ENCODE measurements at regions of chr3 and their contacts with region 1.

Region 1: DNA sequence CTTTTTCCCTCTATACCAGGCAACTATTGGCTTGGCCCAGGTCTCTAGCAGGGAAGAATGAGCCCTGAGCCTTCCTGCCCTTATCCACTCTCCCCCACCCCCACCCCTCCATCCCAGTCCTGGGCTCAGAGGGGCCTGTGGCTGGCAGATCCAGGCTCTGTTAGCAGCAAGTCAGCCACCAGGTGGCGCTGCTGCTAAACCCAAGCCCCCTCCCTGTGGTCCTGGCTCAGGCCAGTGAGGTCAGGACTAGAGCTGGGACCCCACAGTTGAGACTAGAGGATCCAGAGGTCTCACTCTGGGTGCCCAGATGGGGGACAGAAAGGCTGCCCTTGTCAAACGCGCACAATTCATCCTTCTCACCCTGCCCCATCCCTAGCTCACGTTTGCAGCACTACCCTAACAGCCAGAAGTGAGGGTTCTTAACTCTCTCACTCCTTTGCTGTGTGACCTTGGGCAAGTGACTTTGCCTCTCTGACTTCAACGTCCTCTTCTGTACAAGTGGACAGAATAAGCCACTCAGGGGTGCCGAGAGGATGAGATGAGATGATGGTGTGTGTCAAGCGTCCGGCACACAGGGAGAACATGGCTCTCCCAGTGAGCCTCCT is 46.8 kb upstream of the SLC6A1 start:
- DNase-seq: peak; percentile 93
- ATAC-seq: peak; percentile 98
- H3K4me3 Mint-ChIP-seq: no peak overlapping the region
- H3K27ac Mint-ChIP-seq: no peak overlapping the region
- H3K4me1 Mint-ChIP-seq: peaks cover 2% of the 10 kb centered on the region; the same call in 1 of the 2 replicates
- H3K27me3 Mint-ChIP-seq: no peaks in the 10 kb centered on the region; the same call in none of the 2 replicates
- CTCF ChIP-seq: peak; percentile 80

Region 2: GRCh38 chr3:10292505-10293419 is 653.0 kb before region 1 on chr3 and contains the start of gene GHRL:
- CTCF ChIA-PET with region 1: no interaction called
- POLR2A ChIA-PET with region 1: no interaction called
- DNase-seq: no peak
- ATAC-seq: no peak
- H3K4me3 Mint-ChIP-seq: no peak within 1 kb of the TSS
- H3K27ac Mint-ChIP-seq: no peak within 1 kb of the TSS; the same call in 1 of the 2 replicates
- H3K4me1 Mint-ChIP-seq: no peaks in the 10 kb centered on the region
- H3K27me3 Mint-ChIP-seq: no peaks in the 10 kb centered on the region
- CTCF ChIP-seq: no peak
- total RNA-seq, gene GHRL: 0.34 to 0.35 TPM in 2 of 3 replicates, not detected in the other

Region 3: GRCh38 chr3:10764259-10765051 is 181.3 kb before region 1 on chr3:
- CTCF ChIA-PET with region 1: interaction called, 12 read pairs
- POLR2A ChIA-PET with region 1: no interaction called
- DNase-seq: no peak
- ATAC-seq: peak; percentile 62
- H3K4me3 Mint-ChIP-seq: no peak overlapping the region
- H3K27ac Mint-ChIP-seq: no peak overlapping the region
- H3K4me1 Mint-ChIP-seq: peaks cover 8% of the 10 kb centered on the region
- H3K27me3 Mint-ChIP-seq: no peaks in the 10 kb centered on the region; the same call in 1 of the 2 replicates
- CTCF ChIP-seq: no peak

Region 4: GRCh38 chr3:10926811-10927521 is 18.8 kb before region 1 on chr3:
- CTCF ChIA-PET with region 1: interaction called, 10 read pairs
- POLR2A ChIA-PET with region 1: no interaction called
- DNase-seq: no peak
- ATAC-seq: no peak
- H3K4me3 Mint-ChIP-seq: no peak overlapping the region
- H3K27ac Mint-ChIP-seq: no peak overlapping the region
- H3K4me1 Mint-ChIP-seq: 0 out of 2 replicates have a peak, but pooled peaks cover under 1% of the 10 kb centered on the region
- H3K27me3 Mint-ChIP-seq: peaks cover 10% of the 10 kb centered on the region; the same call in 1 of the 2 replicates
- CTCF ChIP-seq: no peak

Region 5: GRCh38 chr3:10977892-10978510 is 32.2 kb after region 1 on chr3:
- CTCF ChIA-PET with region 1: interaction called, 12 read pairs
- POLR2A ChIA-PET with region 1: no interaction called
- DNase-seq: peak; percentile 45
- ATAC-seq: peak; percentile 92
- H3K4me3 Mint-ChIP-seq: peak overlapping the region; percentile 4; the same call in 1 of the 2 replicates
- H3K27ac Mint-ChIP-seq: peak overlapping the region; percentile 54
- H3K4me1 Mint-ChIP-seq: peaks cover 24% of the 10 kb centered on the region
- H3K27me3 Mint-ChIP-seq: peaks cover 21% of the 10 kb centered on the region
- CTCF ChIP-seq: no peak

Region 6: DNA sequence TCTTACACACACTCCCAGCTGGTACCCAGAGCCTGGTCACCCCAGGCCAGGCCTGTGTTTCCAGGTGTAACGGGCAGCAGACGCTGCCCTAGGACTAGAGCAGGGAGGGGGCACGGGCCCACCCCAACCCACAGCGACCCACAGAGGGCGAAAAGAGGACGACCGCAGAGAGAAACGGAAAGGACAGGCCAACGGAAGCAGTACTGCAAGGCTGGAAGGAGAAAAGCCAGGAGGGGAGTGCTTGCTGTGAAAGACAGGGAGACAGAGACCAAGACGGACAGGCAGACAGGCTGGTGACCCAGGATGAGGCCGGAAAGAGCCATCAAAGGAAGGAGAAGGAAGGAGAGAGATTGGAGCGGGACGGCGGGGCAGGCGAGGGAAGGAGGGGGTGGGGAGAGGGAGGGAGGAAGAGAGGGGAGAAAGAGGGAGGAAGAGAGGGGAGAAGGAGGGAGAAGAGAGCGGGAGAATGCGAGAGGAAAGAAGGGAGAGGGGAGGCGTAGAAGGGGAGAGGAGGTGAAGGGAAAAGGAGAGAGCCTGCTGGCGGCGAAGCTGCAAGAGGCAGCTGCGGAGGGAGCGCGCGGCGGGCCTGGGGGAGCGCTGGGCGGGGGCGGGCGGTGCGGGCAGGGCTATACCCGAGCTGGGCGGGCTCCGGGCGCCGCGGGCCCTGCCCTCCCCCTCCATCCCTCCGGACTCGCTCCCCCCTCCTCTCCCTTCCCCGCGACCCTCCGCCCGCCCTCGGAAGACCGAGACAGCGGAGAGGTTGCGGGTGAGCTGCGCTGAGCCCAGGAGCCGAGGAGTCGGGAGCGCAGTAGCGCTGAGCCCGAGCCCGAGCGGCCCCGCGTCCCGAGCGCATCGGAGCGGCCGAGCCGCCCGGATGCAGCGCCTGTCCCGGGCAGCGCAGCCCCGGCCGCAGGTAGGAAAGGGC is 46.5 kb after region 1 on chr3 and contains the start of gene SLC6A1:
- CTCF ChIA-PET with region 1: interaction called, 15 read pairs
- POLR2A ChIA-PET with region 1: no interaction called
- DNase-seq: peak; percentile 66
- ATAC-seq: peak; percentile 76
- H3K4me3 Mint-ChIP-seq: peak within 1 kb of the TSS; percentile 94
- H3K27ac Mint-ChIP-seq: peak within 1 kb of the TSS; percentile 70
- H3K4me1 Mint-ChIP-seq: peaks cover 23% of the 10 kb centered on the region
- H3K27me3 Mint-ChIP-seq: peaks cover 71% of the 10 kb centered on the region
- CTCF ChIP-seq: no peak
- total RNA-seq, gene SLC6A1: 0.50 to 0.72 TPM (median 0.50 TPM) in 3 replicates

Region 7: DNA sequence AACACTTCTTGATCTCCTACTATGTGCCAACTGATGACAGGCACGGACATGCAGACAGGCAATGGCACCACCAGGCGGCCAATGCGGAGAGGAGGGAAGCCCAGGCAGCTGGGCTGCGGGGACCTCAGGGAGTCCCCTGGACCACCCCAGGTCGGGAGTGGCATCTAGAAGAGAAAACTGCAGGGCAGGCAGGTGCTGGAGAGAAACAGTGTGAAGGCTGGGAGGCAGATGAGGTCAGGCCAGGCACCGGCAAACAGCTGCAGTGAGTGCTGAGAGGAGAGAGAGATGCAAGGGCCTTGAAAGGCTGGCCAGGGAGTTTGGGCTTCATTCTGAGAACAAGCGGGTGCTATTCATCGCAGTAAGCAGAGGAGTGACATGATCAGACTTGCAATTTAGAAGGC is 75.8 kb after region 1 on chr3:
- CTCF ChIA-PET with region 1: interaction called, 17 read pairs
- POLR2A ChIA-PET with region 1: no interaction called
- DNase-seq: peak; percentile 31
- ATAC-seq: peak; percentile 82
- H3K4me3 Mint-ChIP-seq: no peak overlapping the region
- H3K27ac Mint-ChIP-seq: no peak overlapping the region
- H3K4me1 Mint-ChIP-seq: no peaks in the 10 kb centered on the region
- H3K27me3 Mint-ChIP-seq: peaks cover 16% of the 10 kb centered on the region
- CTCF ChIP-seq: no peak

Region 8: DNA sequence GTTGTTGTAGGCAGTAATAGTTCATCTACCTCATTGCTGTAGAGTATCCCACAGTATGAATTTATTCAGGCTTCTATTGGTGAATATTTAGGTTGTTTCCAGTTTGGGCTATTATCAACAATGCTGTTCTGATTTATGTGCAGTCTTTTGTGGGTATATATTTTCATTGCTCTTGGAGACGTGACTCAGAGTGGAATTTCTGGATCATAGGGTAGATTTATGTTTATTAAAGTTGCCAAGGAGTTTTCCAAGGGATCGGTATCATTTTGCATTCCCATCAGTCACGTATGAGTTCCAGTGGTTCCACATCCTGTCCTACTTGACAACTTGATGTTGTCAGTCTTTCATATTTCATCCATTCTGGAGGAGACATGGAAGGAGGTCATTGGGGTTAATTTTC is 200.1 kb after region 1 on chr3:
- CTCF ChIA-PET with region 1: no interaction called
- POLR2A ChIA-PET with region 1: no interaction called
- DNase-seq: no peak
- ATAC-seq: no peak
- H3K4me3 Mint-ChIP-seq: no peak overlapping the region
- H3K27ac Mint-ChIP-seq: no peak overlapping the region
- H3K4me1 Mint-ChIP-seq: no peaks in the 10 kb centered on the region
- H3K27me3 Mint-ChIP-seq: peaks cover 22% of the 10 kb centered on the region
- CTCF ChIP-seq: no peak

Measured in WTC11 (cell line).